ENCODE measurements at regions of chr1 and their contacts with region 1.

Region 1: DNA sequence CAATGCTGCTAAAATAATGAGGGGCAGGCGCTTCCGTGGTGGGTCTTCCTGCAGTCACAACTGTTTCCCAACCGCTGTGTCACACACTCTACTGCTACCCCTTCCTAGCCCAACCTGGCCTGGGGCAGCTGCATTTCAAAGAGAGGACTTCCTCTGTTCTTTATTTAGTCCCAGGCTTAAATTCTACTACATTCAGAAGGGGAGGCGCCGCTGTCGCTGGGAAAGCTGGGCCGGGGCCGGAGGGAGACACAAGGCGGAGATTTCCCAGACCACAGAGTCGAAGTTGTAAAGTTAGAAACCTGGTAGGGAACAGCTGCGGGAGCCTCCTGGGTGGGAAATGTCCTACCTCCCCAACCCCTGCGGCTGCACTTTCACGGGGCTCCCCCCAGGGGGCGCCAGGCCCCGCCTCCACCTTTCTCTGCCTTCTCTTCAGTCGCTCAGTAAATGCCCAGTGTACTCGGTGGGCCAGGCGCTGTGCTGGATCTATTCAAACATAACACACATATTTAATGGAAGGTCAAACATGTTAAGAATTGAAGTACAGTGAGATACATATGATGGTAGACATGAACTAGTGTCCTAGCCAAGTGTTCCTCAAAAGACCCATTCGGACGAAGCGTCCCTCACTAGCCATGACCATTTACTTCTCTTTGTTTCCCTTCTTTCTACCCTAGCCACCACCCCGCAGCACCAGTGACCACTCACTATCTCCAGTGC is 23.1 kb downstream of the DYRK3 start:
- DNase-seq: peak; percentile 17 to 69 (median 43)
- ATAC-seq: peak; percentile 95
- H3K4me3 ChIP-seq: no peak overlapping the region
- H3K4me3 Mint-ChIP-seq: peak overlapping the region in 1 of 10 donors; percentile 62
- H3K27ac ChIP-seq: no peak overlapping the region
- H3K27ac Mint-ChIP-seq: peak overlapping the region in 1 of 9 donors; percentile 51
- H3K4me1 ChIP-seq: no peaks in the 10 kb centered on the region
- H3K4me1 Mint-ChIP-seq: peaks cover 5 to 20% (median 10%) of the 10 kb centered on the region in 7 donors
- H3K27me3 ChIP-seq: peaks cover 0 to 4% of the 10 kb centered on the region in 2 donors
- H3K27me3 Mint-ChIP-seq: peaks cover 13 to 42% (median 37%) of the 10 kb centered on the region in 5 donors

Region 2: GRCh38 chr1:205183676-205184335 is 1474.6 kb before region 1 on chr1:
- CTCF ChIA-PET with region 1: no interaction called
- POLR2A ChIA-PET with region 1: no interaction called
- intact Hi-C with region 1: no loop called
- DNase-seq: no peak
- ATAC-seq: no peak
- H3K4me3 ChIP-seq: no peak overlapping the region
- H3K4me3 Mint-ChIP-seq: peak overlapping the region in 8 of 10 donors; percentile 25 to 66 (median 46)
- H3K27ac ChIP-seq: no peak overlapping the region
- H3K27ac Mint-ChIP-seq: peak overlapping the region; percentile 4 to 71 (median 27)
- H3K4me1 ChIP-seq: peaks cover 0 to 14% of the 10 kb centered on the region in 2 donors
- H3K4me1 Mint-ChIP-seq: peaks cover 31 to 57% (median 52%) of the 10 kb centered on the region in 7 donors
- H3K27me3 ChIP-seq: no peaks in the 10 kb centered on the region
- H3K27me3 Mint-ChIP-seq: no peaks in the 10 kb centered on the region

Region 3: GRCh38 chr1:206635080-206635977 is 23.1 kb before region 1 on chr1 and contains the start of gene DYRK3:
- CTCF ChIA-PET with region 1: interaction called, 53 read pairs
- POLR2A ChIA-PET with region 1: no interaction called
- intact Hi-C with region 1: no loop called
- DNase-seq: peak; percentile 71 to 98 (median 80)
- ATAC-seq: peak; percentile 97
- H3K4me3 ChIP-seq: peak within 1 kb of the TSS; percentile 67
- H3K4me3 Mint-ChIP-seq: peak within 1 kb of the TSS; percentile 85 to 96 (median 90)
- H3K27ac ChIP-seq: peak within 1 kb of the TSS; percentile 57
- H3K27ac Mint-ChIP-seq: peak within 1 kb of the TSS; percentile 64 to 93 (median 85)
- H3K4me1 ChIP-seq: peaks cover 8 to 16% of the 10 kb centered on the region in 2 donors
- H3K4me1 Mint-ChIP-seq: peaks cover 14 to 29% (median 18%) of the 10 kb centered on the region in 7 donors
- H3K27me3 ChIP-seq: no peaks in the 10 kb centered on the region
- H3K27me3 Mint-ChIP-seq: peaks cover 7 to 13% (median 9%) of the 10 kb centered on the region in 5 donors
- total RNA-seq, gene DYRK3: 0.22 to 8.2 (median 0.69) TPM